ENCODE measurements at regions of chr12 and their contacts with region 1.

Region 1: DNA sequence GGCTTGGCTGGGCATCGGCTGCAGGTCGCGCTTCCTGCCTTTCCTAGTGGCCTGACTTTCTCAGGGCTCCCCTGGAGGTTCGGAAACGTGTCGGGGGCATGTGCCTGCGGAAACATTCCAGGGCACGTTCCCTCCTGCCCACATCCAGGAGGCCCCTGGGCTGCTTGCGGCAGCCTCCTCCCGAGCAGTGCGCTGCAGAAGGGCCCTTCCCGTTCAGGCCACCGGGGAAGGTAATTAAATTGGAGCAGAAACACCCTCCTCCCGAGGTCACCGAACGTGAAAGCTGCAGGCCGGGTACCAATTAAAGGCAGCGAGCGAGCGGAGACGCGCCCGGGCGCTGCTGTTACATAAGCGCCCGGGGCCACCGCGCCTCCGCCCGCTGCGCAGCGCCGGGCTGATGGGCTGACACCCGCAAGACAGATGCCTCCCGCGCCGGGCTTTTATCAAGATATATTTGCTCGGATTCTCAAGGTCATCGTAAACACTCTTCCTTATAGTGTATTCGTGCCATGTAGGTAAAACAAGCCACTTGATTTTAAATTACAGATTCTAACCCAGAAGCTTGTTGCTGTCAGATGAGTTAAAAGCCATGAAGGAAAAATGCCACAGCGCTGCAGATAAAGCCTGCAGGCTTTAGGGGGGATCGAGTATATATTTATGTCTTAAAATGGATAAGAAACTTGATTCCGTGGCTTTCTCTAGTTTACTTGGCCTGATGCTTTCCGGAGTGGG is 31.4 kb downstream of the SSPN start:
- DNase-seq: peak; percentile 39 to 89 (median 54)

Region 2: DNA sequence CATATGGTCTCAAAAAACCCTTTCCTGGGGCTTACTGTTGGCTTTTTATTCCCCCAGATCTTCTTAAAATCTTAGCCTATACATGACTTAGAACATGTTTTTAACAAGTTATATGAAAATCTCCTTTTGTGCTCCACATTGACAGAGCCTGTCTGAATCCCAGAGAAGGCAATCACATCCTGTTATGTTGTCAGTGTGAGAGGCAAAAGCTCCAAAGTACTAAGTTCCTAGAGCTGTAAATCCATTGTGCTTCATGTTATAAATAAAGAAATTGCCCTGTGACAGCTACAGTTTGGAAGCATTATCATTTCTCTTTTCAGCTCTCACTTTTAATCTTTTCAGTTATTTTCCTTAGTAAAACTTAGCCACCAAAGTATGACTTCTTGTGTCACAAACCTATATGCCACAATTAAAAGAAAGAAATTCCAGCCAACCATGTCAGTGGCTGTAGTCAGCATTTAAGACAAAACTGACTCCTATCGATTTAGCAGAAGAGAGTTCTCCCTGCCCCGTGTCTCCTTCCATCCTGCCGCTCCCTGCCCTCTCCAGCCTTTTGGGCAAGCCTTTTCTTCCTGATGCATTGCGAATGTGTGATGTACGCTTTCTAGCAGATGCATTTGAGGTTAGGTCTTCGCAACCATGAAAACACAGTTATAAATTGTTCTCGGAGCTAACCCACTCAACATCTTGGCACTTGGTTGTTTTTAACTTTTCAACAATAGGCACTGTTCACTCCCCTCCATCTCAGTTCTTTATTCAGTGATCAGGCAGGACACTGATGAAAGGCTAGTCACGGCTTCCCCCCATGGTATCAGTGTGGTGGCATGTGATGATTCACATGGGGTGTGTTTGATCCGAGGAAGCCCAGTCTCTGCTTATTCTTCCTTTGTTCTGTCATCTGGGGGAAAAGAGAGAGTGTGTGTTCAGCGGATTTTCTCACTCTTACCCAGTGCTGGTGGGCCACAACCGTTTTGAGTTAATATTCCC is 112.1 kb after region 1 on chr12:
- intact Hi-C with region 1: loop called (anchors 10 kb)
- DNase-seq: peak in 6 of 10 donors; percentile 57 to 93 (median 67)

Region 3: DNA sequence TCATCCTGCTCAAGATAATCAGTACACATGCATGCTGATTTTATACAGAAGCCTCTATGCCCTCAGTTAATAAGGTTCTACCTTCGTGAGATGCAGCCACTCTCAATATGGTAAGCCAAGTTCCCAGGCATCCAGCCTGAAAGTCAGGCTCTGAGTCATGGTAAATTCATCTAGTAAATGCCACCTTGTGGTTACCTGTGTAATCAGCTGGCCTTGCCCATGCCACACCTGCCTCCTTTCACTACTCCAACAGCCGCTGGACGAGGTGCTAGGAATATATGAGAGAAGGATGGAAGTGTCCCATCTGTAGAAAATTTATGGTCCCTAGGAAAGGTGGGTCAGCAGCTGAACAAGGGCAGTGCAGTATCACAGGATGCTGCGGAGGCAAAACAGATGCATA is 175.9 kb after region 1 on chr12:
- intact Hi-C with region 1: no loop called
- DNase-seq: peak in 1 of 10 donors; percentile 61

Region 4: DNA sequence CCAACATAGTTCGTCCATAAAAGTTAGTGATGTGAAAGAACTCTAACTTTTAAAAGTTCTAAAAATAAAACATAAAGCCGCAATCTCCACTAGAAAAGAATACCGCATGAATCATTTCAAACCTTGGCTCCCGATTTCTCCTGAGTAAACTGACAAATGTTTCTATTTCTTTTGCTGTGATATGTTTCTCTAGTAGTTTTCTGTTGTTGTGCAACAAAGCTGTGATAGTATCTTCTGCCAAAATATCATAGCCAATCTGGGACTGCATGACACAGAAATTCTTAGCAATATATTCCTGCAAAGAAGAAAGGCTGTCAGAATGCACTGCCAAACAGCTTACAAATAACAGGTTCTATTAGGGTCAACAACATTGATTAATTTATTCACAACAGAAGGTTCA is 432.2 kb after region 1 on chr12:
- intact Hi-C with region 1: no loop called
- DNase-seq: no peak

Measured in posterior cingulate gyrus (tissue), 11 donors.